Activated CD8-positive, alpha-beta memory T cell treated with anti-CD3 and anti-CD28 coated beads, Interleukin-2, amount 10 ng/mL, durations not matched to agents 7 days and 5 days (primary cell): ENCODE measurements at regions of chr11 and their contacts with region 1.

Region 1: DNA sequence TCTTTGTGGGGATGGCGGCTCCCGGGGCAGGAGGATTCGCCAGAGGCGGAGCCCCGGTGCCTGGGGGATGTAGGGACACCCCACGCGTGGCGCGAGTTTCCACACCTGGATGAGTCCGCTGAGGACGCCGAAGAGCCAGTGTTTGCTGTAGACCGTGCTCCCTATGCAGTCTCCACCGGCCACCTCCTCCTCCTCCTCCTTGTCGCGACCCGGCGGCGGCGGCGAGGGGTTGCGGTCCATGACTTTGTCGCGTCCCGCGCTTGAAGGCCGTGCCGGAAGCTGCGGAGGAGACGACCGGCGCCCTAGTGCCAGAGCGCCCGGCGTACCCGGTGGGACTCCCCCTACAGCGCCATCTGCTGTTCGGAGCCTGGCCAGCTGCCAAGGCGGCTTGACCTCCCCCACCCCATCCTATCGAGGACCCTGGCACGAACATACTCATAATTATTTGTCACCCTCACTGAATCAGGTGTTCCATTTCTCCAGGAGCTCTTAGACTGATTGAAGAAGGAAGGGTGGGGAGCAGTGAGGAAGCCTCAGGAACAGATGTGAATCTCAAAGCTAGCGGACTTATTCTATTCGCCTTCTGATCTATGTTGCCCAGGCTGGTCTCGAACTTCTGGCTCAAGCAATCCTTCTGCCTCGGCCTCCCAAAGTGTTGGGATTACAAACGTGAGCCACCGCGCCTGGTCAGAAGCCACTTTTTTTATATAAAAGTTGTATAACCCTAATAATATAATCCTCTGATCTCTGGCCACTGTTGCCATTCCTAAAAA is at the start of gene SAAL1:
- DNase-seq: peak; percentile 92
- ATAC-seq: peak; percentile 98
- H3K4me3 Mint-ChIP-seq: peak within 1 kb of the TSS; percentile 92
- H3K27ac Mint-ChIP-seq: peak within 1 kb of the TSS; percentile 89
- H3K4me1 Mint-ChIP-seq: peaks cover 26% of the 10 kb centered on the region
- H3K27me3 Mint-ChIP-seq: peaks cover 10% of the 10 kb centered on the region
- total RNA-seq, gene SAAL1: 30.0 to 35.3 TPM

Region 2: GRCh38 chr11:17991783-17992433 is 114.1 kb before region 1 on chr11:
- CTCF ChIA-PET with region 1: interaction called, 13 read pairs
- DNase-seq: peak; percentile 59
- ATAC-seq: peak; percentile 80
- H3K4me3 Mint-ChIP-seq: no peak overlapping the region
- H3K27ac Mint-ChIP-seq: no peak overlapping the region
- H3K4me1 Mint-ChIP-seq: peaks cover 2% of the 10 kb centered on the region
- H3K27me3 Mint-ChIP-seq: no peaks in the 10 kb centered on the region

Region 3: DNA sequence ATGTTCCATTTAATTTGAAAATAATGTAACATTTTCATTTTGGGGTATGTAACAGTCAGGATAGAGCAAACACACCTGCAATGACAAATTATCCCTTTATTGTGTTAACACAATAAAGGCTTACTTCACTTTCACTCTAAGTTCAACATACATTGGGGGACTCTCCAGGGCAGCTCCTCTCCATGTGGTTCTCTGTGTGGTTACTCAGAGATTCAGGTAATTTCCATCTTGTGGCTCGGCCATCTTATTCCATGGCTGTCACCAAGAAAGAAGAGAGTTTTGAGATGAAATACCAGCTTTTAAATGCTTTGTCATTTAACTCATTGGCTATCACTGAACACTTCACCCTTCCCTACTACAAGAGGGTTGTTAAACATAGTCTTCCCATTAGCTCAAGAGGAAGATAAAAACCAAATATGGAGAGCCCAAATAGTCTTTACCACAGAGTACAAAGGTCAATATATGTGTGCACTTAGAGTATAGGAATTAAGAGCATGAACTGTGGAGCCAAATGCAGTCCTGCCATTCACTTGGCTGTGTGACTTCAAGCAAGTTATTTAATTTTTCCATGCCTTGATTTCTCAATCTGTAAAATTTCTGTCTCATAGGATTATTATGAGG is 49.3 kb before region 1 on chr11:
- CTCF ChIA-PET with region 1: no interaction called
- DNase-seq: no peak
- ATAC-seq: no peak
- H3K4me3 Mint-ChIP-seq: no peak overlapping the region
- H3K27ac Mint-ChIP-seq: no peak overlapping the region
- H3K4me1 Mint-ChIP-seq: no peaks in the 10 kb centered on the region
- H3K27me3 Mint-ChIP-seq: peaks cover 2% of the 10 kb centered on the region

Region 4: DNA sequence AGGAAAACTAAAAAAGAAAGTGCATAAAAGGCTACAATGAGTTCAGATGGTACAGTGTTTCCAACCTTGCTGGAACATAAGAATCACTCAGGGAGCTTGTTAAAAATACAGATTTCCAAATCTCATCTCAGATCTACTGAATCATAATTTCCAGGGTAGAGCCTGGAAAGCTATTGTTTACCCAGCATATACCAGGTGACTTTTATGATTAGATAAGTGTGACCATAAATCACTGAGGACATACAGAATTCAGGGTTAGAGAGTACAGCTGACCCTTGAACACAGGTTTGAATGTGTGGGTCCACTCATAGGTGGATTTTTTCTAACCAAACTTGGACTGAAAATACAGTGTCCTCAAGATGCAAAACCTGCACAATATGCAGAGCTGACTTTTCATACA is 12.0 kb before region 1 on chr11:
- CTCF ChIA-PET with region 1: interaction called, 14 read pairs
- DNase-seq: no peak
- ATAC-seq: no peak
- H3K4me3 Mint-ChIP-seq: no peak overlapping the region
- H3K27ac Mint-ChIP-seq: no peak overlapping the region
- H3K4me1 Mint-ChIP-seq: no peaks in the 10 kb centered on the region
- H3K27me3 Mint-ChIP-seq: no peaks in the 10 kb centered on the region

Region 5: DNA sequence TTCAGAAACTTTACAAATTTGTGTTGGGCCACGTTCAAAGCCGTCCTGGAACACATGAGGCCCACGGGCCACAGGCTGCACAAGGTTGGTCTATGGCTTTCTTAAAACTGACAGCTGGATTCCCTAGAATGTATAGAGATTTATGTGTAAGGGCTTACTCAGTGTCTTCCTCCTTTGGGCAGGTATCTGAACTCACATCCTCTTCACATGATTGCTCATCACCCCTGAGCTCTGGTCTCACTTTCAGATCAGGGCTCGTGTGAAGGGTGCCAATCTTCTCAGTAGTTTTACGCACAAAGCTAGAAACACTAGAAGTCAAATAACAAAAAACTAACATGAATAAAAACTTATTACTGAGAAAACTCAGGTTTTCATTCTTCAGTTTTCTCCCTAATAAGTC is 188.9 kb after region 1 on chr11:
- CTCF ChIA-PET with region 1: no interaction called
- DNase-seq: no peak
- ATAC-seq: peak; percentile 53
- H3K4me3 Mint-ChIP-seq: no peak overlapping the region
- H3K27ac Mint-ChIP-seq: no peak overlapping the region
- H3K4me1 Mint-ChIP-seq: peaks cover 15% of the 10 kb centered on the region
- H3K27me3 Mint-ChIP-seq: no peaks in the 10 kb centered on the region